Activated T-helper 1 cell treated with anti-CD3 and anti-CD28 coated beads, Interleukin-12 subunit alpha, Interleukin-12 subunit beta, Interleukin-2, Interleukin-4 antibody, amounts not matched to agents 30 ng/mL and 10 ng/mL and 1 ng/mL, durations not matched to agents 14 hours and 24 hours and 36 hours (primary cell): ENCODE measurements at regions of chr19 and their contacts with region 1.

Region 1: GRCh38 chr19:10797541-10798256 is 38.3 kb downstream of the TMED1 start:
- DNase-seq: peak; percentile 92
- H3K4me3 Mint-ChIP-seq: peak overlapping the region; percentile 89
- H3K27ac Mint-ChIP-seq: peak overlapping the region; percentile 99
- H3K4me1 Mint-ChIP-seq: peaks cover 58% of the 10 kb centered on the region
- H3K27me3 Mint-ChIP-seq: no peaks in the 10 kb centered on the region

Region 2: DNA sequence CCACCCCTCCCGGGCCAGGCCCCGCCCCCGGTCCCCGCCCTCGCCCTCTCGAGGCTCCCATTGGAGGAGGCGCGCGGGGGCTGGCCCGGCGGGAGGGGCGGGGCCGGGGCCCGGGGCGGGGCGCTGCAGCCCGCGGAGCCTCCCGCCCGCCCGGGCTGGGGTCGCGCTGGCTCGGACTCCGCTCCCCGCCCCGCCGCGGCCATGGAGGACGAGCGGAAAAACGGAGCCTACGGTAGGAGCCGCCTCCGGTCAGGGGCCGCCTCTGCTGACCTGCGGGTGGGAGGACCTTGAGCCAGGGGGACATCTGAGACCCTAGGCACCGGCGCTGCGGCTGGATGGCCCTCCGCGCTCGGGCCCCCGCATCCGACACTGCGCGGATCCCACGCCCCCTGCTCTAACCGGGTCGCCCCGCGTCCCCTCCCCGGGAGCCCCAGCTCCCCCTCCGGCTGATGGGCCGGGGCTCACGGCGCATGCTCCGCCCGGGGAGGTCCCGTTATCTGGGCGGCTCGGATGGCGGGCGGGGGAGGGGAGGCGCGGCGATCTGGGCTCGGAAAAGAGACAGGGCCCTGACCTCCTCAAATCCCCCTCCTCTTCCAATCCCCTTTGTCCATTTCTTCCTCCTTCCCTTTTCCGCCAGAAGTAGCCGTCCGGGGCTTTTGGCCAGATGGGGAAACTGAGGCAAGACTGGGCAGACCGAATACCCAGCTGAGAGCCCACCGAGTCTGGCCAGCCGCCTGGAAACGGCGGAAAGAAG is 195.2 kb before region 1 on chr19:
- intact Hi-C with region 1: loop called (anchors 1 kb)
- DNase-seq: peak; percentile 75
- H3K4me3 Mint-ChIP-seq: peak overlapping the region; percentile 99
- H3K27ac Mint-ChIP-seq: peak overlapping the region; percentile 100
- H3K4me1 Mint-ChIP-seq: peaks cover 24% of the 10 kb centered on the region
- H3K27me3 Mint-ChIP-seq: peaks cover 8% of the 10 kb centered on the region

Region 3: DNA sequence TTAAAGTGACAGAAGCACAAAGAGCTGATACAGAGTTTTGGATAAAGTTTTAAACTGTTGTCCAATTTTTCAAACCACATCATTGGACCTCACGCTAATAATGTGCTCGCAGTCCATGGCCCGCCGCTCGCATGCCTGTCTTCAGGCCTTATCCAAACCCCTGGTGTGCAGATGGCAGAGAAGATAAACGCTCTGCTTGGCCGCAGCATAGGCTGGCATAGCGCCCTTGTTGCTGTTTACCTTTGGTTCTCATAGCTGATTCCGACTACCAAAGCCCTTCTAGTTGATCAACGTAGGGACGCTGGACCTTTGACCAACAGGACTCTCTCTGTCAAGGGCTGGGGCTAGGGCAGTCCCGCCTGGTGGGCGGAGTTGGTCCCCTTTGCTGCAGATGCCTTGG is 119.9 kb before region 1 on chr19:
- intact Hi-C with region 1: no loop called
- DNase-seq: no peak
- H3K4me3 Mint-ChIP-seq: no peak overlapping the region
- H3K27ac Mint-ChIP-seq: no peak overlapping the region
- H3K4me1 Mint-ChIP-seq: no peaks in the 10 kb centered on the region
- H3K27me3 Mint-ChIP-seq: no peaks in the 10 kb centered on the region

Region 4: DNA sequence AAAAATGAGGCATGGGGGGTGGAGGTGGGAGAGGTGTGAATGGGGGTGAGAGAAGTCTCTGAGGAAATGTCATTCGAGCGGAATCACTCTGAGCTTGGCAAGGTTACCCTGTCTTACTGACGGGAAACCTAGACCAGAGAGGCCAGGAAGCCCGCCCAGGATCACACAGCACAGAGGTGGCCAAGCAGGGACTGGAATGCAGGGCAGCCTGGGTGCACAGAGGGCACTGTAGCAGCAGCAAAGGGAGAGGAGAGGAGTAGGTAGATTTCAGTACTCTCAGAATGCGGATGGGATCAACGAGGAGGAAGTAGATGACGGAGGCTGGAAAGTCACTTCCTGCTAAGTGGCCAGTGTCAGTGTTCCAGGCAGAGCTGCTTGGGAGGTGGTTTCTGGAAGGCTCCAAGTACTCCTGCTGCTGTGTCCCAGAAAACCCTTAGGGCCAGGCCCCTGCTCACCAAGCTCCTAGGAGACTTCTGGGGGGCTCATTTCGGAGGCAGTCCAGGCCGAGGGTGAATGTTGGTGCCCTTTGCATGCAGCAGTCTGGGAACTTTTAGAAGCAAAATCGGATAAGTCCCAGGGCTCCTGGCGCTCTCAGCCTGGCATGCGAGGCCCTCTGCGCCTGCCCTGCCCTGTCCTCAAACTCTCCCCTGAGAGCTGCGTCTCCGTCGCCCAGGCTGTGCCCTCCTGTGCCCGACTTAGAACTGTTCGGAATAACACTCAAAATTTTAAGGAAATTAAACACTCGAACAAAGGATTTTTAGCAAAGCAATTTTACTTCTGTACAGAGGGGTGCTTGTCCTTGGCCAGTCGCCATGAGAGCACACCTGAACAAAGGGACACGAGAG is 46.4 kb before region 1 on chr19:
- intact Hi-C with region 1: no loop called
- DNase-seq: no peak
- H3K4me3 Mint-ChIP-seq: peak overlapping the region; percentile 45
- H3K27ac Mint-ChIP-seq: peak overlapping the region; percentile 71
- H3K4me1 Mint-ChIP-seq: peaks cover 77% of the 10 kb centered on the region
- H3K27me3 Mint-ChIP-seq: no peaks in the 10 kb centered on the region

Region 5: DNA sequence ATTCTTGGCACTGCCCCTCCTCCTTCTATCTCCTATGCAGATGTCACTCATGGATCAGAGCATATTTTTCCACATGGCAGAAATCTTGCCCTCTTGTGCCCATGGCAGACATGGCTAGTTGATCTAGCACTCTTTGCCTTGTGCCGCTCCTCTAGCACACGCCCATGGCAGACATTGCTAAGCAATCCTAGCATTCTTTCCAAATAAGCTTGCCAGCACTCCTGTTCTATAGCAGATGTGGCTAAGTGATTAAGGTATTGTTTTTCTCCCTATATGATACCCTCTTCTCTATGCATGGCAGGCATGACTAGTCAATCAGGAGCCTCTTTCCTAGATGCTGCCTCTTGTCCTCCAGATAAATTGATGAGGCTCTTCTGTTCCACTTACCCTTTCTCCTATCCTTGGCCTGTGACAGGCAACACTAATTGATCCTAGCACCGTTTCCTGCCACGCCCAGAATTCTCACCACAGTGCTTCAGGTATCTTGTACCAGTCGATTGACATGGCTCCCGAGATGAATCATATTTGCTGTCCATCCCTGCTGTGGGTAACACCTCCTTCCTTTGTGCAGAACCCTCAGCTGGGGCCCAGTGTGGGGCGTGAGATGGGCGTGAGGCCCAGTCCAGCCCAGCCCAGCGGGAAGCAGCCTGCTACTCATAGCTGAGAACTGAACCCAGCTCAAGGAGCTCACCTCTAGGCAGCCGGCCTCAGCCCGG is 11.4 kb after region 1 on chr19:
- intact Hi-C with region 1: loop called (anchors 1 kb)
- DNase-seq: peak; percentile 38
- H3K4me3 Mint-ChIP-seq: no peak overlapping the region
- H3K27ac Mint-ChIP-seq: peak overlapping the region; percentile 79
- H3K4me1 Mint-ChIP-seq: peaks cover 25% of the 10 kb centered on the region
- H3K27me3 Mint-ChIP-seq: no peaks in the 10 kb centered on the region

Region 6: DNA sequence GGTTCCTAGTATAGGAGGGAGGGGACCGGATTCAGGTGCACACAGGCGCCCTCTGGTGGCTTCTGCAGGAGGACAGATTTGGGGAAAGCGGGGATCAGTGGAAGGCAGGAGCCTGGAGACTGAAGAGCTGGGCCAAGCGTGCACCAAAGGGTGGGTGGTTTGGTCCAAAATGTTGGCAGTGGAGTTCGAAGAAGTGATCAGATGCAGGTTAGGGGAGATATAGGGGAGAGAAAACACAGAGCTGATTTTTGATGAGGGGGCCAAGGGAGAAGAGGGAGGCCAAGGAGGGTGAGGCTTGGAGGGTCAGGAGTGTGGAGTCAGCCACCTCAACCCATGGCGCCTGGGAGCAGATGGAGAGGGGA is 66.8 kb after region 1 on chr19:
- intact Hi-C with region 1: loop called (anchors 1 kb)
- DNase-seq: peak; percentile 68
- H3K4me3 Mint-ChIP-seq: no peak overlapping the region
- H3K27ac Mint-ChIP-seq: peak overlapping the region; percentile 46
- H3K4me1 Mint-ChIP-seq: peaks cover 30% of the 10 kb centered on the region
- H3K27me3 Mint-ChIP-seq: no peaks in the 10 kb centered on the region

Region 7: GRCh38 chr19:10911579-10912363 is 114.1 kb after region 1 on chr19:
- intact Hi-C with region 1: no loop called
- DNase-seq: no peak
- H3K4me3 Mint-ChIP-seq: no peak overlapping the region
- H3K27ac Mint-ChIP-seq: no peak overlapping the region
- H3K4me1 Mint-ChIP-seq: no peaks in the 10 kb centered on the region
- H3K27me3 Mint-ChIP-seq: no peaks in the 10 kb centered on the region

Region 8: DNA sequence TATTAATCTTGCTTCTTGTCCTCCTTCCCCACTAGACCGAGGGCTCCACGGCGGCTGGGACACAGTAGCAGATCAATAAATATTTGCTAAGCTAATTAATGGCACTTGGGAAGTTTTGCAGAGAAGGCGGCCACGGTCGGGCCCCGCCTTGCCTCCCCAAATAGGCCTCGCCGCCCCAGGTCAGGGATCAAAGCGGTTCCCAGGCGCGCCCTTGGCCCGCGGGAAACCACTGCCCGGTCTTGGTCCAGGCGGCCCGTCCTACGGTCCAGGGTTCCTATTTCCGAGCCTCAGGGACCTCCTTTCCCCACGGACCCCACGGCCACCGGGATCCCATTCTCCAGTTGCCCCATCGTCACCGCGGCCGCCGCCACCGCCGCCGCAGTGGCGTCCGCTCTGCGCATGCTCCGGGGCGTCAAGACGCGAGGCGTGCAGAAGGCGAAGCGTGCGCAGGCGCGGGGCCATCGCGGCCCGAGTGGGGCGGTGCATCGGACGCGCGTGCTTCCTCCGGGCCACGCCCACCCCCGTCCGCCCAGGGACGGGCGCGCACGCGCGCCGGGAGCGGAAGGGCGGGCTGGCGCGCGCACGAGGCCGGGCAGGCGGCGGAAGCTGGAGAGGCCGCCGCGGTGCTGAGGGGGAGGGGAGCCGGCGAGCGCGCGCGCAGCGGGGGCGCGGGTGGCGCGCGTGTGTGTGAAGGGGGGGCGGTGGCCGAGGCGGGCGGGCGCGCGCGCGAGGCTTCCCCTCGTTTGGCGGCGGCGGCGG is 162.8 kb after region 1 on chr19 and contains the start of gene SMARCA4:
- intact Hi-C with region 1: loop called (anchors 1 kb)
- DNase-seq: peak; percentile 99
- H3K4me3 Mint-ChIP-seq: peak within 1 kb of the TSS; percentile 89
- H3K27ac Mint-ChIP-seq: peak within 1 kb of the TSS; percentile 87
- H3K4me1 Mint-ChIP-seq: peaks cover 39% of the 10 kb centered on the region
- H3K27me3 Mint-ChIP-seq: peaks cover under 1% of the 10 kb centered on the region
- total RNA-seq, gene SMARCA4: 177 and 178 TPM in 2 replicates

Region 9: GRCh38 chr19:10984166-10984735 is 186.6 kb after region 1 on chr19:
- intact Hi-C with region 1: no loop called
- DNase-seq: no peak
- H3K4me3 Mint-ChIP-seq: no peak overlapping the region
- H3K27ac Mint-ChIP-seq: no peak overlapping the region
- H3K4me1 Mint-ChIP-seq: peaks cover 5% of the 10 kb centered on the region
- H3K27me3 Mint-ChIP-seq: no peaks in the 10 kb centered on the region